Activated CD4-positive, alpha-beta T cell treated with anti-CD3 and anti-CD28 coated beads, Interleukin-2, amount 10 ng/mL, durations not matched to agents 24 days and 14 days (primary cell): ENCODE measurements at regions of chr12 and their contacts with region 1.

Region 1: GRCh38 chr12:46983393-46984266 is 95.8 kb upstream of the PCED1B start:
- DNase-seq: peak; percentile 81
- H3K4me3 Mint-ChIP-seq: no peak overlapping the region
- H3K27ac Mint-ChIP-seq: no peak overlapping the region
- H3K4me1 Mint-ChIP-seq: peaks cover 6% of the 10 kb centered on the region
- H3K27me3 Mint-ChIP-seq: peaks cover 19% of the 10 kb centered on the region

Region 2: GRCh38 chr12:46124848-46125619 is 858.6 kb before region 1 on chr12:
- intact Hi-C with region 1: loop called (anchors 5 kb)
- DNase-seq: peak; percentile 87
- H3K4me3 Mint-ChIP-seq: peak overlapping the region; percentile 56
- H3K27ac Mint-ChIP-seq: peak overlapping the region; percentile 75
- H3K4me1 Mint-ChIP-seq: peaks cover 5% of the 10 kb centered on the region
- H3K27me3 Mint-ChIP-seq: peaks cover 49% of the 10 kb centered on the region

Region 3: DNA sequence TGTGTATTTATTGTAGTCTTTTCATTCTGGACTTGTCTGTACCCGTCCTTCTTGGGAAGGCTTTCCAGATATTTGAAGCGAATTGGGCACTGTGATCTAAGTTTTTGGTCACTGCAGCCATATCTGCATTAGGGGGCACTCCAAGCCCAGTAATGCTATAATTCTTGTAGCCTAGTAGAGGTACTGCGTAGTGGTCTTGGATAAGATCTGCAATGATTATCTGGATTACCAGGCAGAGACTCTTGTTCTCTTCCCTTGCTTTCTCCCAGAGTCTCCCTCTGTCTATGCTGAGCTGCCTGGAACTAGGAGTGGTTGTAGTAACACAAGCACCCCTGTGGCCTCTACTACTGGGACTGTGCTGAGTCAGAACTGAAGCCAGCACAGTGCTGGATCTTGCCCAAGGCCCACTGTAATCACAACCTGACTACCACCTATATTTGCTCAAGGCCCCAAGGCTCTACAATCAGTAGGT is 641.0 kb before region 1 on chr12:
- intact Hi-C with region 1: loop called (anchors 1 kb)
- DNase-seq: peak; percentile 76
- H3K4me3 Mint-ChIP-seq: no peak overlapping the region
- H3K27ac Mint-ChIP-seq: no peak overlapping the region
- H3K4me1 Mint-ChIP-seq: no peaks in the 10 kb centered on the region
- H3K27me3 Mint-ChIP-seq: peaks cover 20% of the 10 kb centered on the region